ENCODE measurements at regions of chr5 and their contacts with region 1.

Region 1: DNA sequence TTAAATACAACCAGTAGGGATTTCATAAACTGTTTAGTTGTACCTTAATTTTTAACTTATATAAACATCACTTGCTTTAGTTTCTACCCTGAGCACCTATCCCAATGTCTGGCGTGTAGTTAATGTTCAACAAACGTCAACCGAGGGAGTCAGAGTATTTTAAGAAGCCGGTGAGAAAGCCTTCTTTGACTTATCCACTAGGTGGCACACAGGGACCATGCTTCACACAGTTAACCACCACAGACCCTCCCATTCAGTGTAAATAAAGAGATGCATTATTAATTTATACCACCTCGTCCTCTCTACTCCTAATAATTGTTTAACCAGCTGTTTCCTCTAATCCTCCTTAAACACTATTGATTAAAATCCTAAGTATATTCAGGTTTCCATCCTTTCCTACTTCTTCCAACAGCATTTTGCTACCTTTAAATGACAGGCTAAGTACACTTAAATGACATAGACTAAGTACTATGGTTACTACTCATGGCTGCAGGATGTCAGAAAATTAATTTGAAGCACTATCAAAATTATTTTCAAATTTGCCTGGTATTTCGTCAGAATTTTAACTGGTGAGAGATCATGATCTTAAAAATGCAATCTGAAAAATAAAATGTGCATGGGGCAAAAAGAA is 2.3 kb downstream of the HAPLN1 start:
- DNase-seq: peak; percentile 33
- H3K4me3 Mint-ChIP-seq: no peak overlapping the region
- H3K27ac Mint-ChIP-seq: no peak overlapping the region
- H3K4me1 Mint-ChIP-seq: peaks cover 6% of the 10 kb centered on the region
- H3K27me3 Mint-ChIP-seq: peaks cover 51% of the 10 kb centered on the region

Region 2: GRCh38 chr5:84306617-84307016 is 588.3 kb after region 1 on chr5:
- CTCF ChIA-PET with region 1: no interaction called
- intact Hi-C with region 1: no loop called
- DNase-seq: no peak
- H3K4me3 Mint-ChIP-seq: no peak overlapping the region
- H3K27ac Mint-ChIP-seq: no peak overlapping the region
- H3K4me1 Mint-ChIP-seq: no peaks in the 10 kb centered on the region
- H3K27me3 Mint-ChIP-seq: no peaks in the 10 kb centered on the region

Region 3: DNA sequence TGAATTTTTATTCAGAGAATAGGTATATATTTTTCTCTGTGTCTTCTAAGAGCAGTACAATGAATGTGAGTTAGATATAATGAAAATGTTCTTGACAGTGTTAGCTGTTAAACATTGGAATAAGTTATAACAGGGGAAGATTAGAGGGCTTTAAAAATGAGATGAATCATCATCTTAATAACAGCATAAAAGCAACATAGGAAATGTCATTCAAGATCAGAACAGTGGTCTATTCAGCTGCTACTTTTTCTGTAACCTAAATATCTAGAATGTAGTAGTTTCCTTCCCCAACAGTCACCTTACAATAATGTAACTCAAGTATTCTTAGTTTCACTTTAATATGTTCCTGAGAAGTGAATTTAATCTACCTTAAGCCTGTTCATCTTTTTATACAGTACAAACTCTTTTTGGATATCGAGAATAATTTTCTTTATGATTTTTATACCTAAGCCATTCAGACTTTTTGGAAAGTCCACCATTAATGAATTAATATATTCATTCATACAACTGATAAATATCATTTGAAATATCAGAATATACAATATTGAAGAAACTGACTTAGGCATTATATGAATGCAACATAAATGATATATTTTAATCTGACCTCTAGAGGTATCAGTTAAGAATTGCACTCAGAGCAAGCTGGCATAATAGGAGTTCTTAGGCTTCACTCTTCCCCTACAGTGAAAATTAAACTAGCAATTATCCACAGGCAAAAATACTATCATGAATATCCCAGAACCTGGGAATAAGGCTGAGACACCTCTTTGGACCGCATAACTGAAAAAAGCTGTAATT is 732.5 kb after region 1 on chr5:
- CTCF ChIA-PET with region 1: no interaction called
- intact Hi-C with region 1: loop called (anchors 1 kb)
- DNase-seq: no peak
- H3K4me3 Mint-ChIP-seq: no peak overlapping the region
- H3K27ac Mint-ChIP-seq: no peak overlapping the region
- H3K4me1 Mint-ChIP-seq: no peaks in the 10 kb centered on the region
- H3K27me3 Mint-ChIP-seq: no peaks in the 10 kb centered on the region